IMR-90 (cell line): ENCODE measurements at regions of chr10 and their contacts with region 1.

Region 1: DNA sequence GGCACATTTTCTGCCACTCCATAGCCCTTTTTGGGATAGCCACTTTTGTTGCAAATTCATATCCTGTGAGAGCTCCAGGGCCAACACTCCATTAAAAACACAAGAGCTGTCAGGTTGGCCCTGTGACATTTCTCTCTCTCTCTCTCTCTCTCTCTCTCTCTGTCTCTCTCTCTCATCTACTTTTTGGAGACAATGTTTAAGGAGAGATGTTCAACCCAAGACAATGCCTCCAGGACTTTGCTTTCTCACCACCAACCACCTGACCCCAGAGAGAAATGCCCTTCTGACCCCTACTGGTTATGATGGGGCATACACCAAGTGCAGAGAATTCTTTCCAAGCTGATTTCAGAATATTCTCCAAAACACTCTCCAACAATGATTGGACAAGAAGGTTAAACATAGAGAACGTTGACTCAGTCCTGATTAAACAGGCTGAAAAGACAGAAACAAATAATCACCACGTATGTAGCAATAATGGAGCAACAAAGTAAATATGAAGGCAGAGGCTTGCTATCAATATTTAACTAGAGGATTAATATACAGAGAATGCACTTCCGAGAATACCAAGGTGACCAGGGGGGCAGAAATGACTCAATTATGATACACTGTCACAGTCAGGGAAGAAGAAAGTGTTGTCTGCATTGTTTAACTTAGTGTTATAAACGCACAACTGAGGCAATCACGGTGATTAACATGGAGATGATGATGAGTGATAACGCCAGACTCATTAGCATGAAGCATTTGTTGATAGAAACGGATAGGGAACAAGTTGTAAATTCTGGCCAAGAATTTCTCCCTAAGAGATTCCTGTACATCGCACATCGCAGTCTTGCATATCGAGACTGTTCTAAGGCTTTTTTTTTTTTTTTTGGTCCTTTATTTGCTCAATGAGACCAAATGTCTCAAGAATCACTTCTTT is 178.5 kb downstream of the NRP1 start:
- DNase-seq: peak; percentile 91
- ATAC-seq: peak; percentile 97
- H3K4me3 ChIP-seq: no peak overlapping the region
- H3K27ac ChIP-seq: peak overlapping the region; percentile 51
- H3K4me1 ChIP-seq: peaks cover 9% of the 10 kb centered on the region
- H3K27me3 ChIP-seq: no peaks in the 10 kb centered on the region
- CTCF ChIP-seq: peak; percentile 90
- POLR2A ChIP-seq: no peak
- RAD21 ChIP-seq: peak; percentile 86

Region 2: DNA sequence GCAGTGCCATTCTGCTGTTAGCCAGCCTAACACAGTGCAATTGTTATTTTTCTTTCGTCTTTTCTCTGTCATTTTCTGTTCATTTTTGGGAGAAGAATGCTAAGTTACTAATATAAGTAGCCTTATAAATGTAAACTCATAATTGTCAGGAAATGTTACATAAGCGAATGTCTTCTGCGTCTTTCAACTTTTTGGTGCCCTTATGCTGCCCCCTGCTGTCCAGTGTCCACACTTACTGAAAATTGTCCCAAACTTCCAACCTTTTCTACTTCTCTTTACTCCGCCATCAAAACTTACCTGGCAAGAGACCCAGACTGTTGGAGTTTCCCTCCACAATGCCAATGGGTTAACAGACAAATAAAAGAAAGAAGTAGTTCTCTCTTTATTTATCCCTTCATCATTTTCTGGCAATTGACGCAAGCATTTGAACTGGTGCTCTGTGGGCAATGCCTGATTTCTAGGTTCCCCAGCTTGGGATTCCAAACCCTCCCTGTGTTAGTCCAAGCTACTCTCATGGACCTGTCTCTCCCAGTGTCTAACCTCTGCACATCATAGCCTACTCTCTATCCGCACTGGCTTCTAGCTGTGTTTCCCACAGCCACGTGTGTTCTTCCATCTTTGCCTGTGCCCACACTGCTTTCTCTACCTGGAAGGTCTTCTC is 788.1 kb before region 1 on chr10:
- CTCF ChIA-PET with region 1: no interaction called
- POLR2A ChIA-PET with region 1: no interaction called
- dilution Hi-C with region 1: no loop called
- in situ Hi-C with region 1: no loop called
- intact Hi-C with region 1: no loop called
- DNase-seq: peak; percentile 75
- ATAC-seq: peak; percentile 88
- H3K4me3 ChIP-seq: no peak overlapping the region
- H3K27ac ChIP-seq: no peak overlapping the region
- H3K4me1 ChIP-seq: no peaks in the 10 kb centered on the region; the same call in 1 of the 2 replicates
- H3K27me3 ChIP-seq: no peaks in the 10 kb centered on the region
- CTCF ChIP-seq: peak; percentile 73
- POLR2A ChIP-seq: no peak
- RAD21 ChIP-seq: peak; percentile 73

Region 3: GRCh38 chr10:33115738-33116719 is 40.0 kb before region 1 on chr10:
- CTCF ChIA-PET with region 1: interaction called, 11 read pairs
- POLR2A ChIA-PET with region 1: no interaction called
- dilution Hi-C with region 1: no loop called
- in situ Hi-C with region 1: no loop called
- intact Hi-C with region 1: no loop called
- DNase-seq: peak; percentile 83
- ATAC-seq: peak; percentile 25
- H3K4me3 ChIP-seq: no peak overlapping the region
- H3K27ac ChIP-seq: peak overlapping the region; percentile 78
- H3K4me1 ChIP-seq: peaks cover 18% of the 10 kb centered on the region
- H3K27me3 ChIP-seq: no peaks in the 10 kb centered on the region
- CTCF ChIP-seq: peak; percentile 56
- POLR2A ChIP-seq: no peak
- RAD21 ChIP-seq: peak; percentile 54

Region 4: DNA sequence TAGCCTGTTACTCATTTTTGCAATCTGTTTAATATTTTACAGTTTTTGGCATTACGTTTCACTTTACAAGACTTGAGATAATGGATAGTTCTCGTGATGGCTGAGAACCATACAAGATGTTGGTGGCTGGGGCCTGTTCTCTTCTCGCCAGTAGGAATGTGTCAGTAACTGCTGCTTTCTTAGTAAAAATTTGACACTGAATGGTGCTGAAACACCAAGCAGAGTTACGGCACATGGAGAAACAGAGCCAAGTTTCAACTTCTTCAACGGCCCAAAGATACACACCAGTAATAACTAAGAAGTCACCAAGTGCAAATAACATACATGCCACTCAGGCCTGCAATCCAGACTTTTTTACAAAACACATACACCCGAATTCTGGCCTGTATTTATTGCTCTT is 48.1 kb after region 1 on chr10:
- CTCF ChIA-PET with region 1: no interaction called
- POLR2A ChIA-PET with region 1: no interaction called
- dilution Hi-C with region 1: no loop called
- in situ Hi-C with region 1: no loop called
- intact Hi-C with region 1: no loop called
- DNase-seq: no peak
- ATAC-seq: no peak
- H3K4me3 ChIP-seq: no peak overlapping the region
- H3K27ac ChIP-seq: no peak overlapping the region
- H3K4me1 ChIP-seq: no peaks in the 10 kb centered on the region
- H3K27me3 ChIP-seq: no peaks in the 10 kb centered on the region
- CTCF ChIP-seq: no peak
- POLR2A ChIP-seq: no peak
- RAD21 ChIP-seq: no peak